Body of pancreas (tissue), 4 donors: ENCODE measurements at regions of chr1 and their contacts with region 1.

Region 1: GRCh38 chr1:6794164-6794563 is 8.9 kb downstream of the CAMTA1 start:
- DNase-seq: no peak
- ATAC-seq: no peak
- H3K4me3 ChIP-seq: no peak overlapping the region
- H3K27ac ChIP-seq: no peak overlapping the region
- H3K4me1 ChIP-seq: peaks cover 20% of the 10 kb centered on the region
- H3K27me3 ChIP-seq: no peaks in the 10 kb centered on the region
- CTCF ChIP-seq: peak in 6 of 7 experiments; percentile 8 to 51 (median 42)
- POLR2A ChIP-seq: no peak

Region 2: DNA sequence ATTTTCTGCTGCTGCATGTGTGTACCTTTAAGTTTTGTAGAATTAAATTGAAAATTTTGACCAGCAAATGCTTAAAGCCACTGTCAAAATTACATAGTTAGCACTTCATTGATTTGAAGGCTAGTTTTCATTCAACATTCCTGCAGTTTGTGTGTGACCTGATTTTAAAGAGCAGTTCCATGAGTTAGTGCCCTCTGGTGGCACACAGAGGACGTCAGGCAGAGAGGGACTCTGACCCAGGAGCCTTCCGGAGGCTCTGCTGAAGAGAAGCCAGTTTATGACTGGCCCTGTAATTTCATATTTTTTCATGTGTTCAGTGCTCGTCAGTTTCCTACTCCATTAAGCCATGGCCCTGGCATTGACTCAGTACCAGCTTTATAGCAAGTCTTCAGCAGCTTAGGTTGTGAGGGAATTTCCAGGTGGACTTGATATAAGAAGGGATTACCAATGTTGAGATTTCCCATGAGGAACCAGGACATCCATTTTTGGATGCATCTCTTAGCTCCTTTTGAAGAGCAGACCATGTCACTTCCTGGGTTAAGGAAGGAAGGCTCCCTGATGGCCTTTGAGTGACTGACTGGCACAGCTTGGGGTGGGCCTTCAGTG is 95.8 kb after region 1 on chr1:
- intact Hi-C with region 1: loop called (anchors 10 kb)
- DNase-seq: peak; percentile 65 to 77 (median 70)
- ATAC-seq: peak; percentile 86
- H3K4me3 ChIP-seq: no peak overlapping the region
- H3K27ac ChIP-seq: no peak overlapping the region
- H3K4me1 ChIP-seq: peaks cover 7% of the 10 kb centered on the region
- H3K27me3 ChIP-seq: no peaks in the 10 kb centered on the region
- CTCF ChIP-seq: peak; percentile 62 to 88 (median 77)
- POLR2A ChIP-seq: no peak